ENCODE measurements at regions of chr14 and their contacts with region 1.

Region 1: GRCh38 chr14:73825551-73826188 is 26.0 kb upstream of the PTGR2 start:
- DNase-seq: peak; percentile 96
- ATAC-seq: peak; percentile 99

Region 2: GRCh38 chr14:73728717-73729330 is 96.8 kb before region 1 on chr14:
- intact Hi-C with region 1: loop called (anchors 2 kb)
- DNase-seq: peak; percentile 91
- ATAC-seq: peak; percentile 75